Endothelial cell of umbilical vein (primary cell): ENCODE measurements at regions of chr14 and their contacts with region 1.

Region 1: DNA sequence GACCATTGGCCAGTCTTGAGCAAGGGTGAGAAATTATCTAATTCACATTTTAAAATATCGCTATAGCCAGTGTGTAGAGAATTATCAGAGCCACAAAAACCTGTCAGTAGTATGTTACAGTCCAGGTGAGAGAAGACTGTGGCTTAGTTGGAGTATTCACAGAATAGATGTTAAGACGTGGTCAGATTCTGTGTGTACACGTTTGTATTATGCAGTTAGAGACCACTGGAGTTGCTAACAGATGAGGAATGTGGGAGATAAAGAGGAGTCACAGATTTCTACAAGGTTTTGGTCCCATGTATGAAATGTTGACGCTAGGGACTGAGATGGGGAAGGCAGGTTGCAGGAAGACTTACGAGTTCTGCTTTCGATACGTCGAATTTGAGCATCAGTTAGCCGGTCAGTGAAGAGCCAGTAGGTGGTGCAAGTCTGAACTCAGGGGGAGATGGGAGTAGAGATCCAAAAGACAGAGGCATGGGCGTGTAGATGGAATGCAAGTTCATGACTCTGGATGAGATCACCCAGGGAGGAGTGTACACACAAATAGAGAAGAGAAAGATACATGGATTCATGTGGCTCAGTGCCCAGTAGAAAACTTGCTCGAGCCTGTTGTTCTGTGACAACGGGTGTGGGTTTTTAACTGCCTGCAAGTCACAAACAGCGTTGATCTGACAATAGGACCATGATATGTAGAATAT is 114.8 kb upstream of the FLRT2 start:
- DNase-seq: peak; percentile 67
- H3K4me3 ChIP-seq: no peak overlapping the region
- H3K27ac ChIP-seq: peak overlapping the region; percentile 79
- H3K4me1 ChIP-seq: peaks cover 38% of the 10 kb centered on the region
- H3K27me3 ChIP-seq: no peaks in the 10 kb centered on the region
- CTCF ChIP-seq: peak in 1 of 2 donors; percentile 28
- POLR2A ChIP-seq: no peak

Region 2: GRCh38 chr14:83816765-83817164 is 1598.4 kb before region 1 on chr14:
- CTCF ChIA-PET with region 1: no interaction called
- POLR2A ChIA-PET with region 1: no interaction called
- dilution Hi-C with region 1: no loop called
- intact Hi-C with region 1: loop called (anchors 10 kb)
- DNase-seq: peak; percentile 87
- H3K4me3 ChIP-seq: peak overlapping the region in 1 of 3 experiments; percentile 35
- H3K27ac ChIP-seq: peak overlapping the region; percentile 37
- H3K4me1 ChIP-seq: peaks cover 21% of the 10 kb centered on the region
- H3K27me3 ChIP-seq: no peaks in the 10 kb centered on the region
- CTCF ChIP-seq: no peak
- POLR2A ChIP-seq: peak; percentile 57

Region 3: GRCh38 chr14:85195872-85196477 is 219.2 kb before region 1 on chr14:
- CTCF ChIA-PET with region 1: no interaction called
- POLR2A ChIA-PET with region 1: no interaction called
- dilution Hi-C with region 1: no loop called
- intact Hi-C with region 1: loop called (anchors 10 kb)
- DNase-seq: peak; percentile 18
- H3K4me3 ChIP-seq: no peak overlapping the region
- H3K27ac ChIP-seq: no peak overlapping the region
- H3K4me1 ChIP-seq: no peaks in the 10 kb centered on the region
- H3K27me3 ChIP-seq: no peaks in the 10 kb centered on the region
- CTCF ChIP-seq: peak; percentile 38 to 48
- POLR2A ChIP-seq: no peak

Region 4: GRCh38 chr14:85565862-85566296 is 150.7 kb after region 1 on chr14:
- CTCF ChIA-PET with region 1: no interaction called
- POLR2A ChIA-PET with region 1: no interaction called
- dilution Hi-C with region 1: no loop called
- intact Hi-C with region 1: no loop called
- DNase-seq: peak; percentile 89
- H3K4me3 ChIP-seq: no peak overlapping the region
- H3K27ac ChIP-seq: peak overlapping the region; percentile 92
- H3K4me1 ChIP-seq: peaks cover 30% of the 10 kb centered on the region
- H3K27me3 ChIP-seq: no peaks in the 10 kb centered on the region
- CTCF ChIP-seq: no peak
- POLR2A ChIP-seq: peak; percentile 21